GM10248 (cell line): ENCODE measurements at regions of chr20 and their contacts with region 1.

Region 1: GRCh38 chr20:36010825-36011224 is 42.4 kb downstream of the CNBD2 start:
- DNase-seq: no peak
- CTCF ChIP-seq: no peak

Region 2: GRCh38 chr20:36135821-36136220 is 125.0 kb after region 1 on chr20:
- CTCF ChIA-PET with region 1: interaction called, 12 read pairs
- POLR2A ChIA-PET with region 1: no interaction called
- DNase-seq: no peak
- CTCF ChIP-seq: no peak